ENCODE measurements at regions of chr20 and their contacts with region 1.

Region 1: GRCh38 chr20:62603021-62603906 is 39.0 kb upstream of the SLCO4A1 start:
- DNase-seq: peak; percentile 81
- H3K4me3 Mint-ChIP-seq: peak overlapping the region; percentile 79
- H3K27ac Mint-ChIP-seq: peak overlapping the region; percentile 64
- H3K4me1 Mint-ChIP-seq: peaks cover 27% of the 10 kb centered on the region
- H3K27me3 Mint-ChIP-seq: peaks cover 33% of the 10 kb centered on the region

Region 2: DNA sequence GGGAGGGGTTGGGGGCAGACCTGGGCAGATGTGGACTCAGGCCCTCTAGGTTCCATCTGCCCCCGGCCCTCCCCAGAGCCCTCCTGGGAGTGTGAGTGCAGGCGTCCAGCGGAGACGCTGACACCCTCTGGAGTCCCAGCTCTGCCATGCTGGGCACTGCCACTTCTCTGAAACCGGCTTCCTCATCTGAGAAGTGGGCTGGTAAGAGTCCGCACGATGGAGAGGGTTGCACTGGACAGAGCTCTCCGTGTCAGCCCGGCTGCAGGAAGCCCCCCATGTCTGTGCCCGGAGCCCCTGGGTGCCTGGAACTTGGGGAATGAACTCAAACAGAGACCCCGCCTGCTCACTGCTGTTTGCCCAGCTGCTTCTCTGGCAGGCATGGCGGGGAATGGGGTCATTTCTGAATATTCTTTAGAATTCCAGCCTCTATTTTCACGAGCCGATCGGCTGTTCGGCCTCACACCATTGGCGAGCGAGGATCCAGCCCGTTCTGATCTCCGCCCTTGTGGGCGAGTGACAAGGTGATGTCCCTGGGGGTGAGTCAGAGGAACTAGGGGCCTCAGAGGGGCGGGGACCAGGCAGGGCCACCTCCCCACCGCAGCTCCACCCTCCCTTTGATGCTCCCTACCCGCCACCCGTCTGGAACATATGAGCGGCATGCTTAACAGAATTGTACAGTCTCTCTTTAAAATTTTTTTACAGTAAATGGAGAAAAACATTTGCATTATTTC is 79.6 kb before region 1 on chr20:
- intact Hi-C with region 1: loop called (anchors 5 kb)
- DNase-seq: peak; percentile 87
- H3K4me3 Mint-ChIP-seq: peak overlapping the region; percentile 56
- H3K27ac Mint-ChIP-seq: peak overlapping the region; percentile 68
- H3K4me1 Mint-ChIP-seq: peaks cover 16% of the 10 kb centered on the region
- H3K27me3 Mint-ChIP-seq: peaks cover 8% of the 10 kb centered on the region

Measured in activated CD4-positive, alpha-beta T cell treated with anti-CD3 and anti-CD28 coated beads, Interleukin-2, amount 10 ng/mL, durations not matched to agents 24 days and 14 days (primary cell).